Panc1 (cell line): ENCODE measurements at regions of chr3 and their contacts with region 1.

Region 1: GRCh38 chr3:46866720-46867549 is 3.7 kb upstream of the MYL3 start:
- DNase-seq: peak; percentile 20
- ATAC-seq: peak; percentile 74
- H3K4me3 ChIP-seq: no peak overlapping the region
- H3K27ac ChIP-seq: no peak overlapping the region
- H3K4me1 ChIP-seq: no peaks in the 10 kb centered on the region
- H3K27me3 ChIP-seq: no peaks in the 10 kb centered on the region
- CTCF ChIP-seq: peak; percentile 89

Region 2: DNA sequence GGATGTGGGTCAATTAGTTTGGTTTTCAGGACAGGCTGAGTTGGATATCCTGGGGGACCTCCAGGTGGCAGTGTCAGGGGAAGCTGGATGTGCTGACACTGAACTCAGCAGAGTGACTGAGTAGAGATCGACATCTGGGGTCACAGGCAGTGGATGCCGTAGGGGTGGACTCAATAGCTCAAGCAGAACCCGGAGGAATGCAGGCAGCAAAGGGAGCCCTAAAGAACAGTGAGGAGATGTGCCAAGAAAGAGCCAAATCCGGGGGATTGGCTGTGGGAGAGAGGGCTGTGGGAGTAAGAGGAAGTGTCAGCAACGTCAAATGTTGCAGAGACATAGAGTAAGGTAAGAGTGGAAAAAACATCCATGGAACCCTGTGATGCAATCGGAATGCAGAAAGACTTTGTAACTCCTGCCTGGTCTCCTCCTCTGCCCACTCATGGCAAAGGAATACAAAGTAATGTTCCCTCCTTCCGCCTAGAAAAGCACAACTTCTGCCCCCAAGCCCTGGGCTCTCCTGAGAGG is 471.7 kb before region 1 on chr3:
- CTCF ChIA-PET with region 1: no interaction called
- POLR2A ChIA-PET with region 1: no interaction called
- in situ Hi-C with region 1: no loop called
- intact Hi-C with region 1: no loop called
- DNase-seq: no peak
- ATAC-seq: no peak
- H3K4me3 ChIP-seq: no peak overlapping the region
- H3K27ac ChIP-seq: no peak overlapping the region
- H3K4me1 ChIP-seq: no peaks in the 10 kb centered on the region
- H3K27me3 ChIP-seq: no peaks in the 10 kb centered on the region
- CTCF ChIP-seq: no peak

Region 3: GRCh38 chr3:46909535-46910442 is 42.9 kb after region 1 on chr3:
- CTCF ChIA-PET with region 1: no interaction called
- POLR2A ChIA-PET with region 1: no interaction called
- in situ Hi-C with region 1: no loop called
- intact Hi-C with region 1: loop called (anchors 5 kb)
- DNase-seq: peak; percentile 55
- ATAC-seq: peak; percentile 87
- H3K4me3 ChIP-seq: no peak overlapping the region
- H3K27ac ChIP-seq: no peak overlapping the region
- H3K4me1 ChIP-seq: no peaks in the 10 kb centered on the region
- H3K27me3 ChIP-seq: no peaks in the 10 kb centered on the region
- CTCF ChIP-seq: peak; percentile 89

Region 4: DNA sequence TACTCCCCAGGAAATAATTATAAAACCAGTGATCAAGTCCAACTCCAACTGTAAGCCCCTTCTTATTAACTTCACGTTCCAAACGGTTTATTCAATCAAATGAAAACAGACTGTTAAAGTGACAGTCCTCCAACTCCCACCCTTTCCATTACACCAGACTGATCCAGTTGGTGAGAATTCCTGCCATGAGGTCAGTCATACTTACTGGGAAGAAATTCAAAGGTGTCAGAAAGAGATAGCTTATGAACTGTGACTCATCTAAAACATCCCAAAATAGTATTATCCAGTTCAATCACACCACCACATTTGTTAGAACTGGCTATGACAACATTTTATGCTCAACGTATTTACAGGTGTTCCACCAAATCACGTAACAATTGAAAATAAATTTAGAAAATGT is 895.3 kb after region 1 on chr3:
- CTCF ChIA-PET with region 1: no interaction called
- POLR2A ChIA-PET with region 1: no interaction called
- in situ Hi-C with region 1: no loop called
- intact Hi-C with region 1: no loop called
- DNase-seq: no peak
- ATAC-seq: no peak
- H3K4me3 ChIP-seq: no peak overlapping the region
- H3K27ac ChIP-seq: no peak overlapping the region
- H3K4me1 ChIP-seq: no peaks in the 10 kb centered on the region
- H3K27me3 ChIP-seq: no peaks in the 10 kb centered on the region
- CTCF ChIP-seq: no peak